ENCODE measurements at regions of chr1 and their contacts with region 1.

Region 1: DNA sequence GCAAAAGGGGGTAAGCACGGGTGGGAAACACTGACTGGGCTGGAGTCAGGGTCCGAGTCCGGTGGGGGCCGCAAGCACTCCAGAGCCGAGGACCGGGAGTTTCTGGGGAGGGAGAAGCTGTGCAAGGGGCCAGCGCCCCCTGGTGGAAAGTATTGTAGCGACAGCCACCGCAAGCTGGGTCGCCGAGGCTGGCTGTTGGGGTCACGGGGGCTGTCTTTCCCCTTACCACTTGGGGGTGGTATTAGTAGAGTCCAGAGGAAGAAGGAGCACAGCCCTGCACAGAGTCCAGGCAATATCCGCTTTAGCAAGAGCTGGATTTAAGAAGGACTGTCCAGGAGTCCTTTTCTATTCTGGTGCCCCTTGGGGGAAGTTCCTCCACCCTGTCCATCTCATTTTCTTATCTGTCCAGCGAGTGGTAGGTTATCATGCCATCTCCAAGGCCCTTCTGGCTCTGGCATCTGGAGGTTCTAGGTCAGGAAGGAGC is 17.9 kb upstream of the ETV3 start:
- DNase-seq: peak; percentile 71 to 93 (median 78)
- ATAC-seq: peak; percentile 87
- H3K4me3 ChIP-seq: no peak overlapping the region
- H3K27ac ChIP-seq: no peak overlapping the region
- H3K4me1 ChIP-seq: peaks cover 21 to 29% of the 10 kb centered on the region in 2 donors
- H3K27me3 ChIP-seq: peaks cover 0 to 4% of the 10 kb centered on the region in 2 donors
- CTCF ChIP-seq: peak; percentile 96 to 99

Region 2: DNA sequence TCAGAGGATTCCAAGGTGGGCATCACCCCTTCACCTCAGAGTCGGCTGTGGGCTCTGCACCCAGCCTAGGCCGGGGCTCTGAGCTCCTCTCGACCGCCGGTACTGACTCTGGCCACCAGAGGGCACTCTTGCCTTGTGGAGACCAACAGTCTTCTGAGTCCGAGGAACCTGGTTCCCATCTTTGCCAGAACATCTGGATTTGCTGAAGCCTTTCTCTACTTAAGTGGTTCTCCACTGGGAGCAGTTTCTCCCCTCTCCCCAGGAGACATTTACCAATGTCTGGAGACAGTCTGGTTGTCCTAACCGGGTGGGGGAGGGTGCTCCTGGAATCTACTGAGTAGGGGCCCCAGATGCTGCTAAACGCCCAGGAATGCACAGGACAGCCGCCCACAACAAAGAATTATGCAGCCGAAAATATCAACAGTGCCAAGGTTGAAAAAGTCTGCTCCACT is 65.9 kb before region 1 on chr1:
- intact Hi-C with region 1: loop called (anchors 2 to 10 kb)
- DNase-seq: peak; percentile 80 to 95 (median 88)
- ATAC-seq: peak; percentile 97
- H3K4me3 ChIP-seq: no peak overlapping the region
- H3K27ac ChIP-seq: no peak overlapping the region
- H3K4me1 ChIP-seq: peaks cover 0 to 7% of the 10 kb centered on the region in 2 donors
- H3K27me3 ChIP-seq: no peaks in the 10 kb centered on the region
- CTCF ChIP-seq: peak; percentile 95 to 97

Measured in left lung (tissue), 14 donors.